K562 (cell line): ENCODE measurements at regions of chr5 and their contacts with region 1.

Region 1: GRCh38 chr5:160245506-160246086 is 16.3 kb downstream of the FABP6 start:
- DNase-seq: no peak
- ATAC-seq: no peak
- H3K4me3 ChIP-seq: no peak overlapping the region
- H3K27ac ChIP-seq: no peak overlapping the region
- H3K4me1 ChIP-seq: peaks cover 14 to 23% of the 10 kb centered on the region in 2 experiments; a peak in 4 of 5 replicates
- H3K27me3 ChIP-seq: peaks cover 0 to 29% of the 10 kb centered on the region in 2 experiments; a peak in 2 of 5 replicates
- CTCF ChIP-seq: no peak
- EP300 ChIP-seq: no peak
- POLR2A ChIP-seq: no peak
- RAD21 ChIP-seq: no peak

Region 2: GRCh38 chr5:160260881-160261815 is 15.6 kb after region 1 on chr5:
- CTCF ChIA-PET with region 1: no interaction called
- POLR2A ChIA-PET with region 1: interaction called, 13 read pairs
- in situ Hi-C with region 1: no loop called
- intact Hi-C with region 1: loop called (anchors 1 kb)
- DNase-seq: peak; percentile 93 to 97 (median 94)
- ATAC-seq: peak; percentile 94
- H3K4me3 ChIP-seq: no peak overlapping the region
- H3K27ac ChIP-seq: peak overlapping the region; percentile 87
- H3K4me1 ChIP-seq: peaks cover 29 to 36% of the 10 kb centered on the region in 2 experiments
- H3K27me3 ChIP-seq: no peaks in the 10 kb centered on the region
- CTCF ChIP-seq: no peak
- EP300 ChIP-seq: peak; percentile 97
- POLR2A ChIP-seq: no peak
- RAD21 ChIP-seq: no peak

Region 3: DNA sequence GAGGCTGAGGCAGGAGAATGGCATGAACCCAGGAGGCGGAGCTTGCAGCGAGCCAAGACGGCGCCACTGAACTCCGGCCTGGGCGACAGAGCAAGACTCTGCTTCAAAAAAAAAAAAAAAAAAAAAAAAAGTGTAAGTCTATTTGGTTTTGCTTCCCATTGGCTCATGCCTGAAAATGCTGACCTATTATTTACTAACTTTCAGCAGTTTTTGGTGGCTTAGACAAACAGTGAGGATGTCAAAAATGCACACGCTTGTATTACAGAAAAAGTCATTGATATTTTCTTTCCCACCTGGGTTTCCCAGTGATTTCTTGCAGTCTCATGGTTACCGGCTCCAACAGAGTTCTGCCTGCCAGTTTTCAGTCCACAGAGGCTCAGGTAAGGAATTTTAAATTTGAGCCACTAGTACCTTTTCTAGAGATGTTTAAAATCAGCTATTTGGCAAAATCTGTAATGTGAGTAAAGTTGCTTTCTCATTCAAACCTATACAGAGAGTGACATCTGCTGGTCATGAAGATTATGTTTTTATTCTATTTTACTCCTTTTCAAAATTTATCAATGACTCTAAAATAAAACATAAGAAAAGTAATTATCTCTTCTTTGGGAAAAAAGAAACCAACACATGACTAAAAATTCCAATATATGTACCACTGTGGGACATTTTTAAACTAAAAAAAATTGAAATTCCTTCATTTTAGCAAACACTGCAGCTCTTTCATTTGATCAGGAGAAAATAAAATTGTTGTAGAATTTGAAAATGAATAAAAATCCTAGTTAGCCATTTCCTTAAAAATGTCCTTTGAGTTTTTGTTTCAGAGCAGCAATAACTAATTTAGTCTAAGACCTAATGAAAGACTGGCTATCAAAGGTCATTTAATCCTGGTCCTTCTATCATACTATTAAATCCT is 145.4 kb after region 1 on chr5:
- CTCF ChIA-PET with region 1: no interaction called
- POLR2A ChIA-PET with region 1: no interaction called
- in situ Hi-C with region 1: no loop called
- intact Hi-C with region 1: loop called (anchors 1 kb)
- DNase-seq: peak in 1 of 4 experiments; percentile 34
- ATAC-seq: peak; percentile 72
- H3K4me3 ChIP-seq: no peak overlapping the region
- H3K27ac ChIP-seq: no peak overlapping the region
- H3K4me1 ChIP-seq: no peaks in the 10 kb centered on the region
- H3K27me3 ChIP-seq: no peaks in the 10 kb centered on the region
- CTCF ChIP-seq: peak in 2 of 3 experiments; percentile 32 to 69; a peak in 3 of 6 replicates
- EP300 ChIP-seq: no peak
- POLR2A ChIP-seq: no peak
- RAD21 ChIP-seq: peak; percentile 74 to 81

Region 4: DNA sequence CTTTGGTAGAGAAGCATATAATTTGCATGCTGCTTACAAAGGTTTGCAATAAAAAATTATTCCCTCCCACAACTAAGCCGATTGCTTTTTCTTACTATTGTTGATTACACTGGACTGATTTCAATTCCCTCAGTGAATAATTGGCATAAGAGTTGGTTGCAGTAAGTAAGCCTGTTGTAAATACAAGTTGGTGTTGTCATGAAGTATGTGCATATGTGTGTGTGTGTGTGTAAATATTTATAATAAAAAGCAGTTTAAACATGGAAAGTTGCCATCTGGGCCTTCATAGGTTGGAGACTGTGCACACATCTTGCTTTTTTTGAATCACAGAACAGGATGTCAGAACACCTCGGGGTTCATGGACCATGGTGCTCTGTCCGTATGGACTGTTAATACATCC is 475.2 kb after region 1 on chr5:
- CTCF ChIA-PET with region 1: no interaction called
- POLR2A ChIA-PET with region 1: no interaction called
- in situ Hi-C with region 1: no loop called
- intact Hi-C with region 1: no loop called
- DNase-seq: no peak
- ATAC-seq: no peak
- H3K4me3 ChIP-seq: no peak overlapping the region
- H3K27ac ChIP-seq: no peak overlapping the region
- H3K4me1 ChIP-seq: no peaks in the 10 kb centered on the region
- H3K27me3 ChIP-seq: no peaks in the 10 kb centered on the region
- CTCF ChIP-seq: no peak
- EP300 ChIP-seq: no peak
- POLR2A ChIP-seq: no peak
- RAD21 ChIP-seq: no peak